Esophagus muscularis mucosa (tissue), 4 donors: ENCODE measurements at regions of chr12 and their contacts with region 1.

Region 1: GRCh38 chr12:103965590-103966504 is at the start of gene TDG:
- DNase-seq: peak; percentile 99
- H3K4me3 ChIP-seq: peak within 1 kb of the TSS; percentile 84 to 96 (median 92)
- H3K27ac ChIP-seq: peak within 1 kb of the TSS; percentile 95 to 98 (median 97)
- H3K4me1 ChIP-seq: peaks cover 48 to 61% (median 58%) of the 10 kb centered on the region in 4 donors
- H3K27me3 ChIP-seq: no peaks in the 10 kb centered on the region
- CTCF ChIP-seq: peak in 2 of 3 experiments; percentile 10 to 22
- EP300 ChIP-seq: no peak
- POLR2A ChIP-seq: peak; percentile 64
- total RNA-seq, gene TDG: 13.7 to 16.4 (median 14.1) TPM

Region 2: DNA sequence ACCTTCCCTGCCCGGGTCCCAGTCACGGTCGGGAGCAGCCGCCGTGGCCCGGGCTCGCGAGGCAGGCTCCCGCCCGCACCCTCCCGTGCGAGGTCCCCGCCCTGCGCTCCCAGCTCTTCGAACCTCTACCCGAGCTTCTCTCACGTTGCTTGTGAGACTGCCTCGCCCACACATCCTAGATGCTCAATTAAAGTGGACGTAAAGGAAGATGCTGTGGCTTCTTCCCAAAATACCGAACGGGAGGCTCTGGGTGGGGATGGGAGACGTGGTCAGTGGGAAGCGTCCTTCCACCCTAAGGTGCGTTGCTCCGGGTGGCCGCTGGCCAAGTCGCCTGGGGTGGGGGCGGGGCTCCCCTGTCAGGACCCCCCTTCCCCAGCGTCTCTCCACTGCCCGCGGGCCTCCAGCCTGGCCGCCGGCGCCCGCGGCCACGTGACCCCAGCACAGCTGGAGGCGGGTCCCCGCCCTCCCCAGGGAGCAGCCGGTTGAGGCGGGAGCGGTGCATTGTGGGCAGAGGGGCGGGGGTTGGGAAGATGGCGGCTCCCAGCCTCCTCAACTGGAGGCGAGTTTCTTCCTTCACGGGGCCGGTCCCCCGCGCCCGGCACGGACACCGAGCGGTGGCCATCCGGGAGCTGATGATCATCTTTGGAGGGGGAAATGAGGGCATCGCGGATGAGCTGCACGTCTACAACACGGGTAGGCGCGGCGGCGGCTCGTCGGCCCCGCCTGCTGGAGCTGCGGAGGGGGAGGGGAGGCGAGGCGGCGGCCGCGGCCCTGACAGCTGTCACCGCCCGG is 98.4 kb after region 1 on chr12 and contains the start of gene HCFC2:
- intact Hi-C with region 1: loop called (anchors 5 kb)
- DNase-seq: peak; percentile 97
- H3K4me3 ChIP-seq: peak within 1 kb of the TSS; percentile 96 to 97 (median 96)
- H3K27ac ChIP-seq: peak within 1 kb of the TSS; percentile 89 to 92 (median 91)
- H3K4me1 ChIP-seq: peaks cover 12 to 46% (median 44%) of the 10 kb centered on the region in 4 donors
- H3K27me3 ChIP-seq: no peaks in the 10 kb centered on the region
- CTCF ChIP-seq: no peak
- EP300 ChIP-seq: no peak
- POLR2A ChIP-seq: peak; percentile 41
- total RNA-seq, gene HCFC2: 22.9 to 37.0 (median 29.5) TPM